ENCODE measurements at regions of chr2 and their contacts with region 1.

Region 1: GRCh38 chr2:143705108-143705686 is 576.0 kb downstream of the ARHGAP15 start:
- DNase-seq: no peak
- H3K4me3 Mint-ChIP-seq: no peak overlapping the region
- H3K27ac Mint-ChIP-seq: peak overlapping the region; percentile 59
- H3K4me1 Mint-ChIP-seq: peaks cover 29% of the 10 kb centered on the region
- H3K27me3 Mint-ChIP-seq: no peaks in the 10 kb centered on the region

Region 2: DNA sequence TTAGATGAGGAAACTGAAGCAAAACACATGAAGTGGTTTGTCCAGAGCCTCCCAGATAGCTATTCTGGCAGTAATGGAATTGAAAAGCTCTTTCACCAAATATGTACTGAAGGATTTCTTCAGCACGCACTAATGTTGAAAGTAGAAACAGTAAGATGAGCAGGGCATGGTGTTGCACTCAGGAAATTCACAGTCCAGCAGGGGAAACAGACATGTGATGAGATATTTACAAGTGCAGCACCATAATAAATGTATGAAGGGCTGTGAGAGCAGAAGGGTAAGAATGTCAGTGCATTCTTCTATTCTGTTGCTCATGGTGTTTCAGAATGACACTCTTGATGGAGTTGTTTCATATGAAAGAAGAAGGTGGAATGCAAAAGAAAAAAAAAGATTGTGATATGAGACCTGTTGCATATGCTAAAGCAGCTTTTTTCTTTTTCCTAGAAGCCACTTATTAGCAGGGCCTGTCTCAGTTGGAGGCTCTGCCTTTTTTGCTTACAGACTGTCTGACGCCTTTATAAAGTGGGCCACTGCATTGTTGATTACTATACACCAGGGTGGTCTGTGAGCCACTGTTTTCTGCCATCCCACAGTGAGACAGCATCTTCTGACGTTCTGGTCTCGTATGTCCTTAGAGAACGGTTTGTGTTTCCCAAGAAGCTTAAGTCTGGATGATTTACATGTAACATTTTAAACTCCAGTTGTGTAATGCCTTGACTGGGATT is 59.1 kb before region 1 on chr2:
- intact Hi-C with region 1: no loop called
- DNase-seq: no peak
- H3K4me3 Mint-ChIP-seq: no peak overlapping the region
- H3K27ac Mint-ChIP-seq: no peak overlapping the region
- H3K4me1 Mint-ChIP-seq: peaks cover 10% of the 10 kb centered on the region
- H3K27me3 Mint-ChIP-seq: no peaks in the 10 kb centered on the region

Region 3: GRCh38 chr2:143674051-143674450 is 31.1 kb before region 1 on chr2:
- intact Hi-C with region 1: loop called (anchors 2 kb)
- DNase-seq: no peak
- H3K4me3 Mint-ChIP-seq: no peak overlapping the region
- H3K27ac Mint-ChIP-seq: no peak overlapping the region
- H3K4me1 Mint-ChIP-seq: peaks cover 6% of the 10 kb centered on the region
- H3K27me3 Mint-ChIP-seq: no peaks in the 10 kb centered on the region

Region 4: GRCh38 chr2:143802871-143803650 is 97.9 kb after region 1 on chr2:
- intact Hi-C with region 1: loop called (anchors 2 kb)
- DNase-seq: no peak
- H3K4me3 Mint-ChIP-seq: no peak overlapping the region
- H3K27ac Mint-ChIP-seq: peak overlapping the region; percentile 49
- H3K4me1 Mint-ChIP-seq: peaks cover 10% of the 10 kb centered on the region
- H3K27me3 Mint-ChIP-seq: peaks cover 2% of the 10 kb centered on the region

Measured in activated T-helper 1 cell treated with anti-CD3 and anti-CD28 coated beads, Interleukin-12 subunit alpha, Interleukin-12 subunit beta, Interleukin-2, Interleukin-4 antibody, amounts not matched to agents 30 ng/mL and 10 ng/mL and 1 ng/mL, durations not matched to agents 14 hours and 24 hours and 36 hours (primary cell).